Dendritic cell treated with granulocyte-macrophage colony-stimulating factor and Interleukin-4, amounts not matched to agents 40 ng/mL and 50 ng/mL, for 4 days (primary cell): ENCODE measurements at regions of chr17 and their contacts with region 1.

Region 1: DNA sequence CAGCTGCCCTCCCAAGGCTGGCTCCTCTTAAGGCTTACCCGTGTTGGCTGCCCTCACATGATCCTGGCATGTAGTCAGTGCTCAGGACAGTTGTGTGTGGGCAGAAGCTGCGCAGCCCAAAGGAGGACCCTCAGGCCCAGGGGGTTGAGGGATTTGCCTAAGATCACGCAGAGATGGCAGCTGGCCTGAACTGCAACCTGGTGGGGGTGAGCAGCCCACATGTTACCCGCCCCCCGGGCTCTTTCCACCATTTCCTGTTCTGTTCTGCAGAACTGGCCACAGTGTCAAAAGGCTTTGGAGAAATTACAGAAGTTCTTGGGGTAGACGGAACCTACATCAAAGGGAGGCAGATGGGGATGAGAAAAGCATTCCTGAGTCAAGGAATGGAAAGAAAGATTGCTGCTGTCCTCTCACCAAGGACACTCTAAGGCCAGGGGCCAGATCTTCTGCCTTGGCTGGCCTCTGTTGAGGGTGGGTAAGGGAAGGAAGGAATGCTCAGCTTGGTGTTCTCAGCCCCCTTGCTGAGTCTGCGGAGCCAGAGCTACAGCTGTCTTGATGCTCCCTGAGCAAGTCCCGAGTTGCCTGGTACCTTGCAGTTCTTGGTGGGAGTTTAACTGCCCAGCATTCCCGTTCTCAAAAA is 53.0 kb downstream of the EPN2 start:
- H3K4me3 Mint-ChIP-seq: peak overlapping the region; percentile 39
- H3K27ac Mint-ChIP-seq: peak overlapping the region; percentile 84
- H3K4me1 Mint-ChIP-seq: peaks cover 84% of the 10 kb centered on the region
- H3K27me3 Mint-ChIP-seq: peaks cover 68% of the 10 kb centered on the region

Region 2: GRCh38 chr17:19306160-19307111 is 16.2 kb after region 1 on chr17:
- intact Hi-C with region 1: loop called (anchors 2 kb)
- H3K4me3 Mint-ChIP-seq: peak overlapping the region; percentile 21
- H3K27ac Mint-ChIP-seq: peak overlapping the region; percentile 83
- H3K4me1 Mint-ChIP-seq: peaks cover 78% of the 10 kb centered on the region
- H3K27me3 Mint-ChIP-seq: peaks cover 66% of the 10 kb centered on the region